ENCODE measurements at regions of chr1 and their contacts with region 1.

Region 1: GRCh38 chr1:11645670-11646265 is 8.5 kb downstream of the FBXO2 start:
- DNase-seq: peak; percentile 75
- CTCF ChIP-seq: peak; percentile 77

Region 2: DNA sequence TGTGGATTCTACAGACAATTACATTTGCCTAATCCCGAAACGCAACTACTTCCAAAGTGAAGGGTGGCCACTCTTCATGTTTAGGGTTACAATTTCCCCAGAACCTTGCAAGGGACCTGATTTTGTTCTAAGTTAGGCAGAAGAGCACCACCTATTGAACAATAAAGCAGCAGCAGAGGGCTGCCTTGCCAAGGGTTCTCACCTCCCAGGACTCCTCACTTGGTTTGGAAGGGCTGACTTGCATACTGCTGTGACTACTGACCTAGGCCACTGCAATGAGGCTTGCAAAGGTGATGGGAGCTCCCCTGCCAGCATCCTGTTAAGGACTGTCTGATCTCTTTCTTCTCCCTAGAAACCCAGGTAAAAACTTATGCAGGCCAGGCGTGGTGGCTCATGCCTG is 397.6 kb before region 1 on chr1:
- CTCF ChIA-PET with region 1: interaction called, 63 read pairs
- POLR2A ChIA-PET with region 1: no interaction called
- DNase-seq: no peak
- CTCF ChIP-seq: peak; percentile 16

Region 3: DNA sequence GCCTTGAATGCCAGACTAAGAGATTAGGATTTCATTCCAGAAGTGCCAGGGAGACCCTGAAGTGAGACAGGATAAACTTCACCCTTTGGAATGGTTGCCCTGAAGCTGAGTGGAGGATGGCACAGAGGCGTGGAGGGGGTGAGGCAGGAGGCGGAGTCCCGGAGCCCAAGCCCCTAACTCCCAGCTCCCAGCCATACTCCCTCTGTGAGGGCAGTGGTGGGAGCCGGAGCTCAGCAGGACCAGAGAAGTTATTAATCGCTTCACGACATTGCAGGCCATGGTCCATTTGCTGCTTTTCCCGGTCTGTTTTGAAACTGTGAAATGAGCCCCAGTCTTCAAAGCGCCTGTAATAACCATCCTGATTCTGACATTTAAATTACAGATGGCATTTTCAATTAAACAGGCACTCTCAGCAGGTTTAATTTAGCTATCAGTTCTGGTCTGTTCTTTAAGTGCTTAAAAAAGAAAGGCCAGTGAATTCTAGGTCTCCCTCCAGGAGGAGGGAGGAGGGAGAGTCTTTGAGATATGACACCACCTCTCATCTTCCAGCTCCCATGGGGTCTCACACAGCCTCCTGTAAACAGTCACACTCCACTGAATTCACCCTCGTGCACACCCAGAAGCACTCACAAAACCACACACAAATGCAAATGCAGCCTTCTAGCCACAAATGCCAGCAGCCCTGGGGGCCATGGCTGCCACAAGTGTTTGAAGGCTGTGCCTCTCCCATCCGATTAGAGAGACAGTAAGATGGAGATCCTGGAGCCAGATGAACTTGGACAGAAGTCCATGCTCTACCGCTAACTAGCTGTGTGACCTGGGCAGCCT is 11.2 kb before region 1 on chr1:
- CTCF ChIA-PET with region 1: interaction called, 25 read pairs
- POLR2A ChIA-PET with region 1: no interaction called
- DNase-seq: no peak
- CTCF ChIP-seq: no peak

Region 4: GRCh38 chr1:11697188-11697892 is 51.6 kb after region 1 on chr1:
- CTCF ChIA-PET with region 1: interaction called, 16 read pairs
- POLR2A ChIA-PET with region 1: no interaction called
- DNase-seq: no peak
- CTCF ChIP-seq: no peak

Region 5: GRCh38 chr1:11735854-11736745 is 90.3 kb after region 1 on chr1 and contains the start of gene AGTRAP:
- CTCF ChIA-PET with region 1: interaction called, 12 read pairs
- POLR2A ChIA-PET with region 1: no interaction called
- DNase-seq: peak; percentile 94
- CTCF ChIP-seq: no peak

Measured in GM10248 (cell line).